CD4-positive, alpha-beta T cell (primary cell): ENCODE measurements at regions of chr15 and their contacts with region 1.

Region 1: DNA sequence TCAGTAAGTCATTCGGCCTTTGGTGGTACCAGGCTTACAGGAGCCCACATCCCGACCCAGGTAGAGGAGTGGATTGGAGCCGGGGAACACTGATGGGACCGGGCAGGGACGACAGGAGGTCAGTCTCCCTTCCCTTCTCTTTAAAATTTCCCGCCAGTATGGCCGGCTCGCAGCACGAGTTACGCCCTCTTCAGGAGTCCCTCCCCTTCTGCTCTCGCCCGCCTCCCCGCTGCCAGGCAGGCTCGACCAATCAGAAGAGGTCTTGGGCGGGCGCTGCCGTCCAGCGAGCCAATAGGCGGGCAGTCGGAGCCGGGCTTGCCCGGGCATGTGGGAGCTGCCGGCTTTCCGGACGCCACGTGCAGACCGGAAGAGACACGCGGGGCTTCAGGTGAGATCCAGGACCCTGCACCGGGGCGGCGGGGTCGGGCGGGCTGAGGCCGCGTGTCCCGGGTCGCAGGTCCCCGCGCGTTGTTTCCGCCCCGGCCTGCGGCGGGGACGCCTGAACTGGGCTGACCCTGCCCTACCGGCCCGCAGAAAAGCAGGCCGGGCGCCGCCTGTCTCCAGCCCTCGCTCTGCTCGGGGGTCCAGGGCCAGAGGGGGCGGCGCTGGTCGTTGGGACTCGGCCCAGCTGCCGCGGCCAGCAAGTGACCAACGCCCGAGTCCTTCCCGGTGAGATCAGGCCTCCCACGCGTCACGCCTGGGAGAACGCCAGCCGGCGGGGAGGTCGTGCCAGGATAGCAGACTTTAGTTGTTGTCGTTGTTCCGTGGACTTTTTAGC is at the start of gene AEN:
- DNase-seq: peak; percentile 91 to 98 (median 94)
- ATAC-seq: peak; percentile 82
- H3K4me3 ChIP-seq: peak within 1 kb of the TSS; percentile 77
- H3K4me3 Mint-ChIP-seq: peak within 1 kb of the TSS; percentile 95
- H3K27ac ChIP-seq: peak within 1 kb of the TSS; percentile 84 to 86
- H3K27ac Mint-ChIP-seq: peak within 1 kb of the TSS; percentile 95
- H3K4me1 ChIP-seq: peaks cover 55% of the 10 kb centered on the region
- H3K4me1 Mint-ChIP-seq: peaks cover 50% of the 10 kb centered on the region
- H3K27me3 ChIP-seq: no peaks in the 10 kb centered on the region
- H3K27me3 Mint-ChIP-seq: peaks cover 9% of the 10 kb centered on the region
- CTCF ChIP-seq: no peak
- total RNA-seq, gene AEN: 40.7 to 43.7 TPM

Region 2: GRCh38 chr15:87570206-87570605 is 1051.0 kb before region 1 on chr15:
- CTCF ChIA-PET with region 1: no interaction called
- POLR2A ChIA-PET with region 1: no interaction called
- intact Hi-C with region 1: no loop called
- DNase-seq: peak in 1 of 14 experiments; percentile 36
- ATAC-seq: no peak
- H3K4me3 ChIP-seq: no peak overlapping the region
- H3K4me3 Mint-ChIP-seq: peak overlapping the region; percentile 71
- H3K27ac ChIP-seq: no peak overlapping the region
- H3K27ac Mint-ChIP-seq: no peak overlapping the region
- H3K4me1 ChIP-seq: no peaks in the 10 kb centered on the region
- H3K4me1 Mint-ChIP-seq: peaks cover 15% of the 10 kb centered on the region
- H3K27me3 ChIP-seq: no peaks in the 10 kb centered on the region
- H3K27me3 Mint-ChIP-seq: no peaks in the 10 kb centered on the region
- CTCF ChIP-seq: no peak

Region 3: GRCh38 chr15:88467073-88467934 is 153.9 kb before region 1 on chr15 and contains the starts of genes MRPL46 and MRPS11:
- CTCF ChIA-PET with region 1: interaction called, 5 read pairs
- POLR2A ChIA-PET with region 1: interaction called, 10 read pairs
- intact Hi-C with region 1: loop called in 1 of 2 experiments (anchors 2 kb)
- DNase-seq: peak; percentile 82 to 94 (median 87)
- ATAC-seq: peak; percentile 91
- H3K4me3 ChIP-seq: peak within 1 kb of the TSS; percentile 74
- H3K4me3 Mint-ChIP-seq: peak within 1 kb of the TSS; percentile 98
- H3K27ac ChIP-seq: peak within 1 kb of the TSS; percentile 80 to 96
- H3K27ac Mint-ChIP-seq: peak within 1 kb of the TSS; percentile 99
- H3K4me1 ChIP-seq: peaks cover 19% of the 10 kb centered on the region
- H3K4me1 Mint-ChIP-seq: peaks cover 43% of the 10 kb centered on the region
- H3K27me3 ChIP-seq: no peaks in the 10 kb centered on the region
- H3K27me3 Mint-ChIP-seq: no peaks in the 10 kb centered on the region
- CTCF ChIP-seq: no peak
- total RNA-seq, gene MRPL46: 8.6 to 10.2 TPM
- total RNA-seq, gene MRPS11: 8.0 to 8.4 TPM

Region 4: GRCh38 chr15:88638626-88639372 is 17.6 kb after region 1 on chr15 and contains the start of gene ISG20:
- CTCF ChIA-PET with region 1: interaction called, 36 read pairs
- POLR2A ChIA-PET with region 1: interaction called, 42 read pairs
- intact Hi-C with region 1: no loop called
- DNase-seq: peak; percentile 93 to 100 (median 96)
- ATAC-seq: peak; percentile 77
- H3K4me3 ChIP-seq: peak within 1 kb of the TSS; percentile 76
- H3K4me3 Mint-ChIP-seq: peak within 1 kb of the TSS; percentile 92
- H3K27ac ChIP-seq: peak within 1 kb of the TSS; percentile 99 to 100
- H3K27ac Mint-ChIP-seq: peak within 1 kb of the TSS; percentile 95
- H3K4me1 ChIP-seq: peaks cover 96% of the 10 kb centered on the region
- H3K4me1 Mint-ChIP-seq: peaks cover 77% of the 10 kb centered on the region
- H3K27me3 ChIP-seq: no peaks in the 10 kb centered on the region
- H3K27me3 Mint-ChIP-seq: no peaks in the 10 kb centered on the region
- CTCF ChIP-seq: peak; percentile 65
- total RNA-seq, gene ISG20: 152 to 157 TPM

Region 5: DNA sequence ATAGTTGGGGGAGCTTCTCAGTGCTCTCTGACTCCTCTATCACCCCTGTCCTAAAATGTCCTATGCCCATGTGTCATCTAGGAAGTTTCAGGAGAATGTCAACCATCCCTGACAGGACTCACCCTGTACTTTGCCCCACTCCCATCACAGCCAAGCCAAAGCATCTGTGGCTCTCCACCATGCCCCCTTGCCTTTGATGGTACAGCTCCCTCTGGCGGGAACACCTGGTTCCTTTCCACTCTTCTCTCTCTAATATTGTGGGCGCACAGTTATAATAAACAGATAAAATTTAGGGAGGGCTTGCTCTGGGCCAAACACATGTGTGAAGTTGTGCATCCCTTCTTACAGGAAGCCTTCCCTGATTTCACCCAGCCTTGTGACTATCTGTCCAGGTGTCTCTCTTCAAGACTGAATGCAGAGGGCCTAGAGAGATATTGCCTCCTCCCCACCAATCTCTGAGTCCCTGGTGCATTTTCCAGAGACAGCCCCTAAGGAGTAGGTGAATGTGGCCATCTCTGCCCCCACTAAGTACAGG is 80.4 kb after region 1 on chr15:
- CTCF ChIA-PET with region 1: interaction called, 5 read pairs
- POLR2A ChIA-PET with region 1: no interaction called
- intact Hi-C with region 1: loop called in 1 of 2 experiments (anchors 1 kb)
- DNase-seq: peak in 8 of 14 experiments; percentile 7 to 45 (median 17)
- ATAC-seq: no peak
- H3K4me3 ChIP-seq: no peak overlapping the region
- H3K4me3 Mint-ChIP-seq: no peak overlapping the region
- H3K27ac ChIP-seq: no peak overlapping the region
- H3K27ac Mint-ChIP-seq: no peak overlapping the region
- H3K4me1 ChIP-seq: peaks cover 12% of the 10 kb centered on the region
- H3K4me1 Mint-ChIP-seq: peaks cover 13% of the 10 kb centered on the region
- H3K27me3 ChIP-seq: peaks cover 10 to 11% of the 10 kb centered on the region in 2 experiments
- H3K27me3 Mint-ChIP-seq: peaks cover 23% of the 10 kb centered on the region
- CTCF ChIP-seq: no peak

Region 6: DNA sequence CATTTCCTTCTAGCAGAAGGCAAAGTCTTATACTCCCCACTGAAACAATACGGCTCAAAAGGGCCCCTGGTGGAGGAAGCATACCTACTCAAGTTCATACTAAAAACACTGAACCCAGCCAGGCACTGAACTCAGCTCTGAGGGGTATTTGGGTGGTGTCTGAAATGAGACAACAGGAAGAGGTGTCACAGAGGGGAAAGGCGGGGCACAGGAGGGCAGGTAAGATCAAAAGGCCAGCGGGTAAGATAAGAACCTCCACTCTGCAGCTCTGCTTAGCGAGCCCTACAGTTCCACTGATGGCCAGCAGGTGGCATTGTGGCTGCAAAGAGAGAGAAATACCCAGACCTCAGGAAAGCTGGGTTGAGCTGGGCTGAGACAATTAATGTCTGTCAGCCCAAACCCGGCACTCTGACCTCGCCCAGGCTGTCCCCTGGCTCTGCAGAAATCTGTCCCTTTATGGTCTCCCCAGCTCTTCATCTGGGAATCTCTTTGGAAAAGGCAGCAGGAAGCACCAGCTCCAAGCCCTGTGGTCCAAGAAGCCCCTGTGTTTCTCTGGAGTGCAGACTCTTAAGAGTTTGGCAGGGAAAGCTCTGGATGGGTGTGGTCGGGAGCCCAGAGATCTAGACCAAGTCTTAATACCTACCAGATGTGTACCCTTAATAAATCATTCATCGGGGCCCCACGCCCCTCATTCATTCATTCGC is 283.6 kb after region 1 on chr15:
- CTCF ChIA-PET with region 1: interaction called, 11 read pairs
- POLR2A ChIA-PET with region 1: interaction called, 11 read pairs
- intact Hi-C with region 1: loop called (anchors 2 to 5 kb)
- DNase-seq: peak; percentile 94 to 98 (median 96)
- ATAC-seq: peak; percentile 98
- H3K4me3 ChIP-seq: no peak overlapping the region
- H3K4me3 Mint-ChIP-seq: peak overlapping the region; percentile 17
- H3K27ac ChIP-seq: peak overlapping the region; percentile 67 to 76
- H3K27ac Mint-ChIP-seq: peak overlapping the region; percentile 93
- H3K4me1 ChIP-seq: peaks cover 43% of the 10 kb centered on the region
- H3K4me1 Mint-ChIP-seq: peaks cover 50% of the 10 kb centered on the region
- H3K27me3 ChIP-seq: no peaks in the 10 kb centered on the region
- H3K27me3 Mint-ChIP-seq: no peaks in the 10 kb centered on the region
- CTCF ChIP-seq: peak; percentile 96

Region 7: DNA sequence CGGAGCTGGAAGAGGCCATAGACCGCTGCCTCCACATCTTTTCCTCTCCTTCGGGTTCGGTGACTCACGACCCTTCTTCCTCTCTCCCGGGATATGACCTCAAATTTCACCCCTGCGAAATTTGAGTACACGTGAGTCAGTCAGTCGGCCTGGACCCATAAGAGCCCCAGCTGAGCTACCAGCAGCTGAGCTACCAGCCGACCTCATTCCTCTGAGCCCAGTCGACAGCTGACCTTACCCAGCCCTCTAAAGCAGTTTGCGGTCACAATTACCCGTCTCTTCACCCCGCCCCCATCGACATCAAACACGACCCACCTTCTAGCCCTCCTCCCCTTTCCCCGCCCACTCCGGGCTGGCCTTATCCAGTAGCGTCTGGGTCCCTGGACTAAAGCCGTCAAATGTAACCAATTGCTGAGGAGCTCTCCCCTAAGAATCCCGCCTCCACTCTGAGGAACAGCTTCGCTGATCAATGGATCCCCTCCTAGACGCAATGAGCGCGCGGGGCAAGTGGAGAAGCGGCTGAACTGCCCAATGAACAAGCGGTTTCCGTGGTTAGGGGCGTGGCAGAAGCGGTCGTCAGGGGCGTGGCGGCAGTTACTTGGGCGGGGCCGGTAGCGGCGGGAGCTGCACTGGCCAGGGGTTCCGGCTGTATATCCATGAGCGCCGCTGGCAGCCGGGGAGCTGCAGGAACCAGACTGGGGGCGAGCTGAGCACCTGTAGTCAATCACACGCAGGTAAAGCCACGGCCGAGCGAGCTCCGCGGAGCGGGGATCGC is 466.8 kb after region 1 on chr15 and contains the start of gene ABHD2:
- CTCF ChIA-PET with region 1: interaction called, 3 read pairs
- POLR2A ChIA-PET with region 1: interaction called, 3 read pairs
- intact Hi-C with region 1: loop called in 1 of 2 experiments (anchors 5 kb)
- DNase-seq: peak; percentile 95 to 99 (median 97)
- ATAC-seq: peak; percentile 95
- H3K4me3 ChIP-seq: peak within 1 kb of the TSS; percentile 97
- H3K4me3 Mint-ChIP-seq: no peak within 1 kb of the TSS
- H3K27ac ChIP-seq: peak within 1 kb of the TSS; percentile 49 to 55
- H3K27ac Mint-ChIP-seq: peak within 1 kb of the TSS; percentile 90
- H3K4me1 ChIP-seq: peaks cover 37% of the 10 kb centered on the region
- H3K4me1 Mint-ChIP-seq: peaks cover 30% of the 10 kb centered on the region
- H3K27me3 ChIP-seq: no peaks in the 10 kb centered on the region
- H3K27me3 Mint-ChIP-seq: no peaks in the 10 kb centered on the region
- CTCF ChIP-seq: no peak
- total RNA-seq, gene ABHD2: 36.0 to 39.2 TPM

Region 8: DNA sequence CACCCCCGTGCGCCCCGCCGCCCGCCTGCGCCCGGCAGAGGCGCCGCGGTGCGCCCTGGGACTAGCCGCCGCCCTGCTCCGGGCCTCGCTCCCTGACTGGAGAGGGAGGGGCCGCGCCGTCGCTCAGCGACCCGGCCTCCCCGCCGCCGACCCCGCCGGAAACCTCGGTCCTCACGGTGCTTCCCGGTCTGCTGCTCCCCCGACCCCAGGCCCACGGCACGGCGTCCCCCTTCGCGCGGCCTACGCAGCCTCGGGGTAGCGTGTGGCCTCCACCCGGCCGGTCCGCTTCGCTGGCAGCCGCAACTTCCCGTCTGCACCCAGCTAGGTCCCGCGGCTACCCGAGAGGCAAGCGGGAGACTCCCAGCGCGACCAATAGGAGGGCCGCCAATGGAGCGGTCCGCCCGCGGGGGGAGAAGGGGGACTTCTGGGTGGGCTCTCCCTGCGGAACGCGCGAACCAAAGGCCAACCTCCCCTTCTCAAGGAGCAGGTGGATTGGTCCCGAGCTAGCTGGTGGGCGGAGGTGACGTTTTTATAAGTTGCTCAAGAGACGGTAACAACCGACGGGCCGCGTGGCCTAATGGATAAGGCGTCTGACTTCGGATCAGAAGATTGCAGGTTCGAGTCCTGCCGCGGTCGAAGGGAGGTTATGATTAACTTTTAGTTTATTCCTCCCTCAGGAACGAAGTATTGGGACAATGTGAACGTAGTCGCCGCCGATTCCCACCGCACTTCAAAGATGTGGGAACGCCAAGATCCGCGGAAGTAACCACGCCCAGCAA is 713.5 kb after region 1 on chr15 and contains the start of gene POLG:
- CTCF ChIA-PET with region 1: no interaction called
- POLR2A ChIA-PET with region 1: interaction called, 4 read pairs
- intact Hi-C with region 1: loop called (anchors 10 kb)
- DNase-seq: peak; percentile 98 to 100 (median 99)
- ATAC-seq: peak; percentile 91
- H3K4me3 ChIP-seq: peak within 1 kb of the TSS; percentile 92
- H3K4me3 Mint-ChIP-seq: peak within 1 kb of the TSS; percentile 96
- H3K27ac ChIP-seq: peak within 1 kb of the TSS; percentile 55 to 79
- H3K27ac Mint-ChIP-seq: peak within 1 kb of the TSS; percentile 100
- H3K4me1 ChIP-seq: peaks cover 54% of the 10 kb centered on the region
- H3K4me1 Mint-ChIP-seq: peaks cover 56% of the 10 kb centered on the region
- H3K27me3 ChIP-seq: no peaks in the 10 kb centered on the region
- H3K27me3 Mint-ChIP-seq: peaks cover 11% of the 10 kb centered on the region
- CTCF ChIP-seq: no peak
- total RNA-seq, gene POLG: 139 to 140 TPM